Transverse colon (tissue), 4 donors: ENCODE measurements at regions of chr4 and their contacts with region 1.

Region 1: GRCh38 chr4:87465739-87466366 is 43.5 kb downstream of the NUDT9 start:
- DNase-seq: no peak
- H3K4me3 ChIP-seq: no peak overlapping the region
- H3K27ac ChIP-seq: no peak overlapping the region
- H3K4me1 ChIP-seq: peaks cover 0 to 7% (median 0%) of the 10 kb centered on the region in 4 donors
- H3K27me3 ChIP-seq: no peaks in the 10 kb centered on the region
- CTCF ChIP-seq: peak; percentile 64 to 82 (median 70)
- EP300 ChIP-seq: no peak
- POLR2A ChIP-seq: no peak

Region 2: GRCh38 chr4:87144356-87144755 is 321.5 kb before region 1 on chr4:
- in situ Hi-C with region 1: loop called in 1 of 4 experiments (anchors 25 kb)
- intact Hi-C with region 1: no loop called
- DNase-seq: no peak
- H3K4me3 ChIP-seq: no peak overlapping the region
- H3K27ac ChIP-seq: peak overlapping the region in 1 of 4 donors; percentile 16
- H3K4me1 ChIP-seq: peaks cover 0 to 22% (median 8%) of the 10 kb centered on the region in 4 donors
- H3K27me3 ChIP-seq: no peaks in the 10 kb centered on the region
- CTCF ChIP-seq: no peak
- EP300 ChIP-seq: no peak
- POLR2A ChIP-seq: no peak

Region 3: DNA sequence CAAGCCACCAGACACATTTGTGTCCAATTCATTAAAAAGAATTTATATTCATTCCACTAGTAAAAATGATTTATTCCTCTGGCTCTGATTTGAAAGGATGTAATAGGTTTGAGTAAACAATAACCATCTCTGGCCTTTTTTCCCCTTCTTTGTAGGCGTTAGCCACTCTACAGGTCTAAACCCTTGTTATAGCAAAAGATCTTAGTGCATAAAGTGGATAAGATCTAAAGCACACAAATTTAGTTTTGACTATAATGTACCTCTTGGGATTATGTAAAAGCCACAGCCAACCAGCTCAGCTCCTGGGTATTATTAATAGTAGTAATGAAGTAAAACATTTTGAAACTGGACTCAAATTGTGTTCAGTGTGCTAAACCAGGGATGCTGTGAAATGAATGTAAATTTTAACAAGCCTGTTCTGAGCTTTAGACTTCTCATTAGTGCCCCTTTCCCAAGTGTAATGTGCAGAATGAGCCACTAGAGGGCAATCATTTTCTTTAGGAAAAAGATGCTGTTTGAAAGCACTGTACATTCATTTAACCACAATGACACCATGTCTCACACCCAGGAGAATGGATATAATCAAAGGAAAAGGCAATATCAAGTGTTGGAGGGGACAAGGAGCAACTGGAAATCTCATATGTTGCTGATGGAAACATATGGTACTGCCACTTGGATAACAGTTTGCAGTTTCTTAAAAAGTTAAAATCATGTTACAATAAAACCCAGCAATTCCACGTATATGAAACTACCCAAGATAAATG is 315.2 kb before region 1 on chr4:
- in situ Hi-C with region 1: loop called in 2 of 4 experiments (anchors 25 kb)
- intact Hi-C with region 1: no loop called
- DNase-seq: peak; percentile 36
- H3K4me3 ChIP-seq: no peak overlapping the region
- H3K27ac ChIP-seq: peak overlapping the region in 1 of 4 donors; percentile 61
- H3K4me1 ChIP-seq: peaks cover 0 to 22% (median 15%) of the 10 kb centered on the region in 4 donors
- H3K27me3 ChIP-seq: no peaks in the 10 kb centered on the region
- CTCF ChIP-seq: peak; percentile 91 to 95 (median 94)
- EP300 ChIP-seq: no peak
- POLR2A ChIP-seq: no peak

Region 4: GRCh38 chr4:87209696-87210095 is 256.2 kb before region 1 on chr4:
- in situ Hi-C with region 1: no loop called
- intact Hi-C with region 1: no loop called
- DNase-seq: peak; percentile 35
- H3K4me3 ChIP-seq: no peak overlapping the region
- H3K27ac ChIP-seq: peak overlapping the region in 1 of 4 donors; percentile 44
- H3K4me1 ChIP-seq: peaks cover 3 to 20% (median 6%) of the 10 kb centered on the region in 4 donors
- H3K27me3 ChIP-seq: no peaks in the 10 kb centered on the region
- CTCF ChIP-seq: no peak
- EP300 ChIP-seq: no peak
- POLR2A ChIP-seq: no peak

Region 5: GRCh38 chr4:87270144-87270543 is 195.7 kb before region 1 on chr4:
- in situ Hi-C with region 1: loop called in 2 of 4 experiments (anchors 10 kb)
- intact Hi-C with region 1: no loop called
- DNase-seq: no peak
- H3K4me3 ChIP-seq: no peak overlapping the region
- H3K27ac ChIP-seq: no peak overlapping the region
- H3K4me1 ChIP-seq: no peaks in the 10 kb centered on the region
- H3K27me3 ChIP-seq: no peaks in the 10 kb centered on the region
- CTCF ChIP-seq: peak; percentile 37 to 56 (median 41)
- EP300 ChIP-seq: no peak
- POLR2A ChIP-seq: no peak

Region 6: DNA sequence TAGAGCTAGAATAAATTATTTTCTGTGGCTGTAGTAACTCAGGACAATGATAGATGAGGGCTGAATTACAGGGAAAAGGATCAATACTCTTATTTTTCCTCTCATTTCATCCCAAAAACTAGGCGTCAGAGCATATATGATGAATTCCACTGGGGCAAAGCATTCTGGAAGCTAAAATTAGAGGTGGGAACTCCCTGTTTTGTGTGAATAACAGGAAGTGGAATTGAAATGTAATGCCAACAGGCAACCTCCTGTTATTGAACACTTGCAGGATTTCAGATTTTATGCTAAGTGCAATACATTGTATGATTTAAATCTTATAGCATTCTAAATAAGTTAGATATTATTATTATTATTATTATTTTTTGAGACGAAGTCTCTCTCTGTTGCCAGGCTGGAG is 95.8 kb before region 1 on chr4:
- in situ Hi-C with region 1: loop called in 3 of 4 experiments (anchors 5 to 10 kb)
- intact Hi-C with region 1: no loop called
- DNase-seq: no peak
- H3K4me3 ChIP-seq: no peak overlapping the region
- H3K27ac ChIP-seq: no peak overlapping the region
- H3K4me1 ChIP-seq: no peaks in the 10 kb centered on the region
- H3K27me3 ChIP-seq: no peaks in the 10 kb centered on the region
- CTCF ChIP-seq: no peak
- EP300 ChIP-seq: no peak
- POLR2A ChIP-seq: no peak

Region 7: GRCh38 chr4:87375719-87376291 is 90.0 kb before region 1 on chr4:
- in situ Hi-C with region 1: loop called in 3 of 4 experiments (anchors 5 to 10 kb)
- intact Hi-C with region 1: no loop called
- DNase-seq: no peak
- H3K4me3 ChIP-seq: no peak overlapping the region
- H3K27ac ChIP-seq: peak overlapping the region; percentile 4 to 52 (median 26)
- H3K4me1 ChIP-seq: peaks cover 0 to 23% (median 0%) of the 10 kb centered on the region in 4 donors
- H3K27me3 ChIP-seq: no peaks in the 10 kb centered on the region
- CTCF ChIP-seq: peak; percentile 69 to 83 (median 76)
- EP300 ChIP-seq: no peak
- POLR2A ChIP-seq: no peak

Region 8: DNA sequence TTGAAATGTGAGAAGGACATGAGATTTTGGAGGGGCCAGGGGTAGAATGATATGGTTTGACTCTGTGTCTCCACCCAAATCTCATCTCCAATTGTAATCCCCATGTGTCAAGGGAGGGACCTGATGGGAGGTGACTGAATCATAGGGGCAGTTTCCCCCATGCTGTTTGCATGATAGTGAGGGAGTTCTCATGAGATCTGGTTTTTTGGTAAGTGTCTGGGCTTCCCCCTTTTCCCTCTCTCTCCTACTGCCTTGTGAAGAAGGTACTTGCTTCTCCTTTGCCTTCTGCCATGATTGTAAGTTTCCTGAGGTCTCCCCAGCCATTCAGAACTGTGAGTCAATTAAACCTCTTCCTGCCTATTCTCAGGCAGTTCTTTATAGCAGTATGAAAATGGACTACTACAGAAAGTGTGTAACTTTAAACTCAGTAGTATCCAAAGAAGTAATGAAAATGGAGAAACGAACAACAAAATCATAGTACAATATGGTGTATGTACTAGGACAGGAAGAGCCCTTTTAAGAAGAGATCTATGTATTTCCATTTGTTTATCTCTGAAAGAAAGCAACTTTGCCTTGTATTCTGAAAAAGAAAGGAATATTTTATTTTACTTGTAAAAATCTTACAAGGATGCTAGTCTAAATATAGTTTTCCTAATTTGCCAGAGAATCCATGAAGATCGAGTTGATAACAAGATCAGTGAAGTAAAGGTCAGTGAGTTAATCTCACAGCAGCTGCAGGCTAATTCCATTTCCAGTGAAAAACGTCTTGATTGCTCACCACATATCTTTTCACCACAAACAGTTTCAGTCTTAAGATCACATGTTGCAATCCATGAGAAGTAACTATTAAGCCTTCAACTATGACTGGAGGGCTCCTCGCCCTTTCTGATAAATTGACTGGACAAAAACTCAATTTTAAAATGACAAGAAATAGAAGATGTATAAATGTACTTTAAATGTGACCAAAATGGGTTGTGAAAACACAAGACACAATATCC is 562.1 kb after region 1 on chr4:
- in situ Hi-C with region 1: no loop called
- intact Hi-C with region 1: no loop called
- DNase-seq: no peak
- H3K4me3 ChIP-seq: no peak overlapping the region
- H3K27ac ChIP-seq: peak overlapping the region in 2 of 4 donors; percentile 12 to 62
- H3K4me1 ChIP-seq: peaks cover 0 to 11% (median 0%) of the 10 kb centered on the region in 4 donors
- H3K27me3 ChIP-seq: no peaks in the 10 kb centered on the region
- CTCF ChIP-seq: no peak
- EP300 ChIP-seq: no peak
- POLR2A ChIP-seq: no peak